ENCODE measurements at regions of chr4 and their contacts with region 1.

Region 1: DNA sequence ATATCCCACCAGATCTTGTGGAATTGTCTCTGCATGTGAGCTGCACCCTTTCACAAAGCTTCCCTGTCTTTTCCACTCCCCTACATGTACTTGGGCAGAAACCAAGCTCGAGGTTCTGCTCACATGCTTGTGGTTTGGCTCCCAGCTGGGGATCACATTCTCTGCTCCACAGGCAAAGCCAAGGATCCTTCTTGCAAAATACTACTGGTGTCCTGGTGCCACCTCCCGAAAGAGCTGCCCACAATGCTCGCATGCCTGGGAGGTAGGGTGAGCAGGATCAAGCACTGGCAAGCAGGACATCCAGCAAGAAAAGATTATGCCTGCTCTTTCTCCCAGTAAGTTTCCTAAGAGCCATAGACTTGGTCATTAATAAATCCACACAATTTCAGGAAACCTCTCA is 45.1 kb upstream of the PPARGC1A start:
- DNase-seq: peak; percentile 64 to 86 (median 76)
- ATAC-seq: peak; percentile 47 to 80 (median 70)
- H3K4me3 ChIP-seq: no peak overlapping the region
- H3K27ac ChIP-seq: peak overlapping the region; percentile 23 to 95 (median 80)
- H3K4me1 ChIP-seq: peaks cover 0 to 44% (median 9%) of the 10 kb centered on the region in 12 donors
- H3K27me3 ChIP-seq: no peaks in the 10 kb centered on the region
- CTCF ChIP-seq: peak in 2 of 12 donors; percentile 11 to 30
- POLR2A ChIP-seq: no peak

Region 2: DNA sequence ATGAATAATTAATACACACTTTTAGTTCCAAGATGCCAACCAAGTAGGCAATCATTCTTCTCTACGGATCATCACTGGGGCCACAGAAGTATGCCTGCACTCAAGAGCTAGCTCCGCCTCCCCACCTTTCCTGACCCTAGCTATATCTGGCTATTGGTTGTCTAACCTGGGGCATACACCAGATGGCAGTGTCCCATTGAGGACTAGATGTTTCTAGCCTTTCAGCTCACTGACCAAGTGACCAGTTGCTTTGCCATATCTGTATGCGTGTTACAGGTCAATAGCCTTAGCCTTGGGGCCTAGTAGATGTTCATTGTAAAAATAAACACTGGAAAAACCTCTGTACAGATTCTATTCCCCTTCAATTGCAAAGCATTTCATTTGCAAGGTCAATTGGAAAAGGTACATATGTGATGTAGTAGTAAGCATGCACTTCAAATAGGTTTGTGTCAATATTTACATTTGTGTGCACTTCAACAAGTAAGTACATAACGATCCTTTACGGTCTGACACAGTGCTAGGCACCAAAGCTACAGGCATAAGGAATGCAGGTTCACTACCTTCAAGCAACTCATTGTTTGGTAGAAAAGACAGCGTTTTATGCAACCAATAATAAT is 566.7 kb before region 1 on chr4:
- intact Hi-C with region 1: loop called in 3 of 10 experiments (anchors 5 to 10 kb)
- DNase-seq: peak in 4 of 5 donors; percentile 22 to 60 (median 43)
- ATAC-seq: peak; percentile 64 to 87 (median 85)
- H3K4me3 ChIP-seq: no peak overlapping the region
- H3K27ac ChIP-seq: peak overlapping the region in 2 of 12 donors; percentile 8 to 50
- H3K4me1 ChIP-seq: peaks cover 0 to 23% (median 2%) of the 10 kb centered on the region in 12 donors
- H3K27me3 ChIP-seq: no peaks in the 10 kb centered on the region
- CTCF ChIP-seq: peak in 11 of 12 donors; percentile 36 to 67 (median 50)
- POLR2A ChIP-seq: no peak

Region 3: DNA sequence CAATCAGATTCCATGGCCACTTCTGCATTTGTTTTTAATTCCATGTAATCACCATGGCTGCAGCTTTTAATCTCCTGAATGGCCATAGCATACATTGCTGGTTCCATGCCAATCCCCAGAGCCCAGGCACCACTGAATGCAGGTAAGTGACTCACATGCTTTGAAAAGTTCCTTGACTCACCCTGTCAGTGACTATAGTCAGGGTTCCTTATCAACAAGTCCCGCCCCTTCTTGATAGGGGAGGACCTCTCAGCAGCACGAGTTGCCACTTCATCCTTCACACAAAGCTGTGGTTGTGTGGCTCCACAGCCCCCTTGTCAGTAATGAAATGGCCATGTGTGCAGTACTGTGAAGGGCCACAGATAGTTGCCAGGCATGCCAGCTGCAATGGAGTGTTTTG is 561.7 kb before region 1 on chr4:
- intact Hi-C with region 1: loop called in 3 of 10 experiments (anchors 5 to 10 kb)
- DNase-seq: peak; percentile 56 to 79 (median 67)
- ATAC-seq: peak; percentile 92 to 94 (median 93)
- H3K4me3 ChIP-seq: no peak overlapping the region
- H3K27ac ChIP-seq: peak overlapping the region; percentile 2 to 86 (median 72)
- H3K4me1 ChIP-seq: peaks cover 0 to 39% (median 4%) of the 10 kb centered on the region in 12 donors
- H3K27me3 ChIP-seq: no peaks in the 10 kb centered on the region
- CTCF ChIP-seq: no peak
- POLR2A ChIP-seq: no peak

Region 4: DNA sequence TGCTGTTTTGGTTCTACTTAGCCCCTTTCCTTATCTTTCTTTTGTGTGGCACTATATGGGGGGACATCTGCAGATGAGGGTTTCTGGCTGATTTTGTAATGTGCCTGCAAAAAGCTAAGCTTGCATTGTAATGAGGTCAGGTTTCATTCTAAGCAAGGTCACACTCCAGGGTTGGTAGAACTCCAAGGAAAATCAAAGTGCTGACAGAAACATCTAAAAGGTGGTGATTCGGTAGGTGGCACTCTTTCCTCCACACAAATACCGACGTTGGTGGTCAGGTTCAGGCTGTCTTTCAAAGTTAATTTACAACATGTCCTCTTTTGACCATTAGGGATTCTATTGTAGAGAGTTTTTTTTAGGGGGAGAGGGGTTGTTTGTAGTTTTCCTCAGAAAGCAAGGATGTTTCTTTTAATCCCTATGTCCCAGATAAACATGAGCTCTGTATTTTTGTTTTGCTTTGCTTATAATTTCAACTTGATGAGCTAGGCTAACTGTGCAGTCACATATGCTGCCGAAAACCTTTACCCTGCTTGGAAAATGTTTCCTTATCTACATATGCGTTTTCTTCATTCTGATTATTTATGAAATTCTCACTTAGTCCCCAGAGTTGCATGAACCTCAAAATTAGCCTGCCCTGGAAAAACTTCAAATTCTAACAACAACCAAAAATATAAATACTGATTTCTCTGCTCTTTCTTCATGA is 479.3 kb before region 1 on chr4:
- intact Hi-C with region 1: loop called in 1 of 10 experiments (anchors 10 kb)
- DNase-seq: peak in 3 of 5 donors; percentile 19 to 33 (median 32)
- ATAC-seq: peak; percentile 85 to 90 (median 88)
- H3K4me3 ChIP-seq: no peak overlapping the region
- H3K27ac ChIP-seq: peak overlapping the region in 6 of 12 donors; percentile 28 to 54 (median 44)
- H3K4me1 ChIP-seq: peaks cover 0 to 29% (median 1%) of the 10 kb centered on the region in 12 donors
- H3K27me3 ChIP-seq: no peaks in the 10 kb centered on the region
- CTCF ChIP-seq: peak in 6 of 12 donors; percentile 10 to 40 (median 30)
- POLR2A ChIP-seq: no peak

Region 5: DNA sequence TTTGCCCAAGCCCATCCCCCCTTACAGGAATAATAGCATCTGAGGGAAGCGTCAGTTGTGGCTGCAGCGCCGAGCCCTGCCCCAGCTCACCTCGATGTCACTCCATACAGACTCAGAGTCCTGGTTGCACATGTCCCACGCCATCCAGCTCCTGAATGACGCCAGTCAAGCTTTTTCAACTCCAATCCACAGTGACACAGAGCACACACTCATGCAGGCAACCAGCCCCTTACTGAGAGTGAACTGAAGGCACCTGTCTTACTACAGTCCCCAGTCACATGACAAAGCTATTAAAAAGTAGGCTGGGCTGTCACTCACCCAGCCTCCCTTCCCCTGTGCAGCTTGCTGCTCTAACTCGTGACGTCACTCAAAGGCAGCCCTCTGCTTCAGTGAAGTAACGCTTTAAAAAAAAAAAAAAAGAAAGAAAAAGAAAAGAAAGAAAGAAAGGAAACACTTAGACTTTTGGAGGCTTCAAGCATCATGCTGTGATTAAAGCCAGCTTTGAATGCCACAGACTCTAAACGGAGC is 45.0 kb before region 1 on chr4 and contains the start of gene PPARGC1A:
- intact Hi-C with region 1: loop called in 6 of 10 experiments (anchors 1 to 5 kb)
- DNase-seq: peak in 4 of 5 donors; percentile 73 to 82 (median 78)
- ATAC-seq: peak; percentile 91 to 95 (median 94)
- H3K4me3 ChIP-seq: peak within 1 kb of the TSS; percentile 39 to 73 (median 58)
- H3K27ac ChIP-seq: peak within 1 kb of the TSS; percentile 80 to 94 (median 86)
- H3K4me1 ChIP-seq: peaks cover 0 to 14% (median under 1%) of the 10 kb centered on the region in 12 donors
- H3K27me3 ChIP-seq: no peaks in the 10 kb centered on the region
- CTCF ChIP-seq: no peak
- POLR2A ChIP-seq: peak in 1 of 2 donors; percentile 84
- total RNA-seq, gene PPARGC1A: 47.2 to 103 (median 84.4) TPM

Region 6: GRCh38 chr4:24244663-24245490 is 310.0 kb after region 1 on chr4:
- intact Hi-C with region 1: loop called in 3 of 10 experiments (anchors 2 to 5 kb)
- DNase-seq: peak; percentile 60 to 89 (median 76)
- ATAC-seq: peak; percentile 94 to 96 (median 96)
- H3K4me3 ChIP-seq: no peak overlapping the region
- H3K27ac ChIP-seq: peak overlapping the region; percentile 56 to 94 (median 82)
- H3K4me1 ChIP-seq: peaks cover 5 to 71% (median 32%) of the 10 kb centered on the region in 12 donors
- H3K27me3 ChIP-seq: no peaks in the 10 kb centered on the region
- CTCF ChIP-seq: no peak
- POLR2A ChIP-seq: no peak